GM13976 (cell line): ENCODE measurements at regions of chr12 and their contacts with region 1.

Region 1: DNA sequence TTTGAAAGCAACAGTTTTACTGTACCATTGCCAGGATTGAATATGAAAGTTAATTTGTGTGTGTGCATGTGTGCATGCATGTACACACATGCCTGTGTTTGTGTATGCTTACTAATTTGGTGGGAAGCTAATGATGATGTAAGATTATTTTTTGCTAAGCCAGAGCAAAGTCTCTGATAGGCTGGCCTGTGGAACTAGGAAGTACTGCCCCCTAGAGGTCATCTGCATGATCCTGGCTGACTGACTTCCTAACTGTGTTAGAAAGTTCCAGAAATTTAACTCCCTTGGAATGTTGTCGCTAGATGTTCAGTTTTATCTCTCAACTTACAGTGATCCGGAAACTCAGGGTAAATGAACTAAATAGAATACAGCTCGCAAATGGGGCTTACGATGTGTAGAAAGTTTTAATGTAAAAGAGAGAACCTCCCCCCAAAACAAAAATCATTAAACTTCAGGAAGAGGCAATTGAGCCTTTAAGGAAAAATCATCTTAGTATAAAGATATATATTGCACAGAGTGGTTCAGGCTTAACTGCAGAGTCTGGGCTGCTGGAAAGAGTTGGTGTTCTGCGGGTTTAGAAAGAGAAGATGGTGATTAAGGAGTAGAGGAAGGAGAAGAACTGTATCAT is 34.3 kb upstream of the SLC38A1 start:
- DNase-seq: peak; percentile 40
- CTCF ChIP-seq: peak; percentile 54

Region 2: DNA sequence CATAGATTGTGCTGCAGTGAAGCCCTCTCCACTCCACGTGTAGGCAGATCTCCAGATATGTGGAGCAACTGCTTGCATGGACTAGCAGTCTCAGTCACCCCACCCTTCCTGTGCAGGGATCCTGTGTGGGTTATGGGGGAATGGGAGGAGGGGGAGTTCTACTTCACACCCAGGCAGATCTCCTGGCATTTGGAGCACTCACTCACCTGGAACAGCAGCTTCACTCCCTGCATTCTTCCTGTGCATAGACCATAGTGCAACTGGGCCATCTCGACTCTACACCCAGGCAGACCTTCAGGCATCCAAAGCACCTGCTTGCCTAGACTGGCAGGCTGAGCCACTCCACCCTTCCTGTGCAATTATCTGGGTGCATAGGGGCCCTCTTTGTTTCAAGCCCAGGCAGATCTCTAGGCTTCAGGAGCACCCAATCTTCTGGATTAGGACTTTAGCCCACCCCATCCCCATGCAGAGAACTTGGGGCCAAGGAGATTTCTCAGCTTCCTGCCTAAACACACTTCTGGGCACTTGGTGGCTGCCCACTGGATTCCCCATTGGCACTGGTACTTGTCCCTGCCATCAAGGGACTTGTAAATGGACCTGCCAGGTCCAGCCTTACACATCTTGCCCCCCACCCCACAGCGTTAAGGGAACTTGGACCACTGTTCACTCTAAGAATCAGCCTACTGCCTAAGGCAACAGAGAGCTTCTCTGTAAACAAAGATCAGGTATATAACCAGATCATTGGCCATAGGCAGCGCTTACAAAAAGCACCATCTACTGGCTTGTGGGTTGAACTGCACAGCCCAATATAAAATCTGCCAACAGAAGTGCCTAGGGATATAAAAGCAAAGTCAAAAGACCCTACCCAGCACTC is 680.5 kb after region 1 on chr12:
- in situ Hi-C with region 1: loop called (anchors 25 kb)
- DNase-seq: peak; percentile 50
- CTCF ChIP-seq: peak; percentile 67